Activated naive CD4-positive, alpha-beta T cell treated with anti-CD3 and anti-CD28 coated beads, Interleukin-2, amount 10 ng/mL, durations not matched to agents 7 days and 5 days (primary cell): ENCODE measurements at regions of chr11 and their contacts with region 1.

Region 1: GRCh38 chr11:14148653-14149273 is 186.2 kb downstream of the SPON1 start:
- DNase-seq: no peak
- H3K4me3 Mint-ChIP-seq: no peak overlapping the region
- H3K27ac Mint-ChIP-seq: no peak overlapping the region
- H3K4me1 Mint-ChIP-seq: no peaks in the 10 kb centered on the region
- H3K27me3 Mint-ChIP-seq: peaks cover 5% of the 10 kb centered on the region

Region 2: GRCh38 chr11:13772223-13773046 is 376.3 kb before region 1 on chr11:
- CTCF ChIA-PET with region 1: interaction called, 19 read pairs
- DNase-seq: peak; percentile 40
- H3K4me3 Mint-ChIP-seq: no peak overlapping the region
- H3K27ac Mint-ChIP-seq: no peak overlapping the region
- H3K4me1 Mint-ChIP-seq: peaks cover 11% of the 10 kb centered on the region
- H3K27me3 Mint-ChIP-seq: peaks cover 25% of the 10 kb centered on the region

Region 3: GRCh38 chr11:13962562-13963168 is 186.1 kb before region 1 on chr11 and contains the start of gene SPON1:
- CTCF ChIA-PET with region 1: interaction called, 45 read pairs
- DNase-seq: peak; percentile 82
- H3K4me3 Mint-ChIP-seq: peak within 1 kb of the TSS; percentile 71
- H3K27ac Mint-ChIP-seq: no peak within 1 kb of the TSS
- H3K4me1 Mint-ChIP-seq: peaks cover 32% of the 10 kb centered on the region
- H3K27me3 Mint-ChIP-seq: peaks cover 92% of the 10 kb centered on the region

Region 4: DNA sequence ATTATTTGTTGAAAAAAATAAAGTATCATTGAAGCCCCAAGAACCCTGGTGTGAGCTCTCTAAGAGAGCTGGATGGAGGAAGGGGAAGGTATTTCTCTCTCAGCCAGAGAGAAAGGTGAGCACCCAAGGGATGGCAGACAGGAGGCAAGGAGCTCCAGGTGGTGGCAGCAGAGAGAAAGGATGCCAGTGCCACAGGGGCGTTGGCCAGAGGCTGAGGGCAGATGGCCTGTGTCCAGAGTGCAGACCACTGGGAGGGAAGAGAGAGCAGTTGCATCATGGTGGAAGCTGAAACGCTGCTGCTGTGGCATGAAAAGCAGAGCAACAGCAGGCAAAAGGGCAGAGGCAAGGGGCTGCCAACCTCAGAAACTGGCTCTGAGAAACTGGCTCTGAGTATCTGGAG is 177.8 kb before region 1 on chr11:
- CTCF ChIA-PET with region 1: interaction called, 29 read pairs
- DNase-seq: peak; percentile 29
- H3K4me3 Mint-ChIP-seq: no peak overlapping the region
- H3K27ac Mint-ChIP-seq: no peak overlapping the region
- H3K4me1 Mint-ChIP-seq: peaks cover 29% of the 10 kb centered on the region
- H3K27me3 Mint-ChIP-seq: peaks cover 28% of the 10 kb centered on the region

Region 5: DNA sequence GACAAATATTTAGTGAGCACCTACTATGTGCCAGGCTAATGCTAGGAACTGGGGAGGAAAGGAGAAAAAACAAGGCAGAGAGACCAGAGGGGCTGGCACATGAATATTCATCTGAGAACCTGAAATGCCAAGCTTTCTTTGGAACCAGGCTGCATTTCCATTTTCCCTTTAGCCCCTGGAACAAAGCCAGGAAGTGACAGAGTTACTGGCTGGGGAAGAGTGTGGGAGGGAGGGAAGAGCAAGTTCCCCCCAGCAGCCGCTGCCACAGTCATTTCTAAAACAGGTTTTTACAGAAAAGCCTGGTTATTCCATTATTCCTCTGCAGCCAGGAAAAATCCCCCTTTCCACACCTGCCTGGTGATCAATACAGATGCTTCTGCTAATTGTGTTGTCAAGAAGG is 89.3 kb before region 1 on chr11:
- CTCF ChIA-PET with region 1: no interaction called
- DNase-seq: no peak
- H3K4me3 Mint-ChIP-seq: no peak overlapping the region
- H3K27ac Mint-ChIP-seq: no peak overlapping the region
- H3K4me1 Mint-ChIP-seq: peaks cover 11% of the 10 kb centered on the region
- H3K27me3 Mint-ChIP-seq: peaks cover 11% of the 10 kb centered on the region

Region 6: DNA sequence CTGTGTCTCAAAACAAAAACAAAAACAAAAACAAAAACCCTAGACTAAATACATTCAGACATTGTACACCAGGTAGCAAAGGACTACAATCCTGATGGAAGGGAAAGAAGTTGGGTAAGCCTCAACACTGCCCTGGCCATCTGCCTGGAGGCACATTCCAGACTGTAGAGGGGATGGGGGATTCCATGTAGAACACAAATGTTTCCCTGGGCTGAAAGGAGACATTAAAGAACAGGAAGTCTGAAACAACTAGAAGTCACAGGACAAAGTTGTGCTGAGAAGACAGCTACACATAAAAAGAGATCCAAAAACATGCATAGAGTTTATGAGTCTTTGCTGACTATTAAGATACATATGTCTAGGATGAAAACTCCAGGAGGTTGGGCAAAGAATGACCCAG is 126.3 kb after region 1 on chr11:
- CTCF ChIA-PET with region 1: no interaction called
- DNase-seq: no peak
- H3K4me3 Mint-ChIP-seq: no peak overlapping the region
- H3K27ac Mint-ChIP-seq: no peak overlapping the region
- H3K4me1 Mint-ChIP-seq: peaks cover 31% of the 10 kb centered on the region
- H3K27me3 Mint-ChIP-seq: no peaks in the 10 kb centered on the region